ENCODE measurements at regions of chr5 and their contacts with region 1.

Region 1: GRCh38 chr5:52799983-52800393 is 12.3 kb downstream of the ITGA1 start:
- DNase-seq: peak; percentile 92 to 96 (median 94)
- H3K4me3 ChIP-seq: peak overlapping the region; percentile 63 to 100 (median 84)
- H3K27ac ChIP-seq: peak overlapping the region; percentile 49 to 96 (median 88)
- H3K27me3 ChIP-seq: no peaks in the 10 kb centered on the region
- CTCF ChIP-seq: peak in 24 of 56 donors; percentile 7 to 56 (median 30)

Region 2: DNA sequence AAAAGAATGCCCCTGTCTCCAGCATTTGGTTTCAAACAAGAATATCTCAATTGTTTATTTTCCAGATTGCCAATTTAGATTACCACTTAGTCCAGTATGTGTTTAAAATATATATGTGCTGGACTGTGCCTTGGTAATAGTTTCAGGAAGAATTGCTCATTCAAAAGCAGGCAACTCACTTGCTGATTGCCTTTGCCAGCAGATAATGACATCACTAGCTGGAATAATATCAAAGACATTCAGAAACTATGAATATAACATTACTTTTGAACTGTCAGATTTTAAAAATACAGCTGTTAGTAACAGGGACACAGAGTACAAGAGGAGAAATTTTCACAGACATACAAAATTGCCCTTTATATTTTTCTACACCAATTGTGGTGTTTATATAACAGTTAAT is 93.1 kb after region 1 on chr5:
- intact Hi-C with region 1: loop called (anchors 10 kb)
- DNase-seq: no peak
- H3K4me3 ChIP-seq: peak overlapping the region in 2 of 59 donors; percentile 1 to 5
- H3K27ac ChIP-seq: peak overlapping the region in 43 of 59 donors; percentile 1 to 83 (median 55)
- H3K27me3 ChIP-seq: peaks cover 0 to 3% (median 0%) of the 10 kb centered on the region in 45 donors
- CTCF ChIP-seq: peak in 2 of 56 donors; percentile 3 to 13

Region 3: GRCh38 chr5:53095931-53096525 is 296.0 kb after region 1 on chr5:
- intact Hi-C with region 1: loop called in 1 of 2 experiments (anchors 10 kb)
- DNase-seq: peak in 6 of 10 donors; percentile 41 to 86 (median 58)
- H3K4me3 ChIP-seq: no peak overlapping the region
- H3K27ac ChIP-seq: peak overlapping the region in 4 of 59 donors; percentile 11 to 54 (median 29)
- H3K27me3 ChIP-seq: no peaks in the 10 kb centered on the region
- CTCF ChIP-seq: peak; percentile 83 to 99 (median 94)

Region 4: DNA sequence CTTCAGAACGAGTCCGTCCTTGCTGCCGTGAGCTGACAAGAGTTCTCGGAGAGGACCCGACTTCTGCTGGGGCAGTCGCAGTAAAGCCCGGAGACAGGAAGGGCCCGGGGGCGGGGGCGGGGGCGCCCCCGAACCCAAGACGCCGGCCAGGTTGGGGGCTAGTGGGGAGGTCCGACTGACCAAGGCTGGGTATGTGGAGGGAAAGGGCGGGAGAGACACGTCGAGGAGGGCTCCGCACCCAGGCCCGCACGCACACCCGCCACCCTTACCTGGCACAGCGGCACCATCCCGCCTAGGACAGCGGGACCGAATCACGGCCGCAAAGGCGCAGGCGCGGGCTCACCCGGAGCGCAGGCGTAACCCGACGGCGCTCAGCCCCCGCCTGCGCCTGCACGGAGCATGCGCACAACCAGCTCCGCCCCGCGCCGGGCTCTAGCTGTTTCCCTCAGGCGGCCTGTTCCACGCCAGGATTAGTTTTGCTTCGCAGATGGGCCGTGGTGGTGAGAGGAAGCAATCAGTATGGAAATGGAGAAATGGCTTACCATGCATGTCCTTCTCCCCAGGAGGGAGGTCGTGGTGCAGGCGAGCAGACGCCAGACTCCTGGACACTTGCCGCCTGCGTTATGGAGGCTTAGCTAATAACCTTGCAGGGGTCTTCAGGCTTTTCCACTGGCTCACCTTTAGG is 309.6 kb after region 1 on chr5 and contains the start of gene MOCS2:
- intact Hi-C with region 1: loop called in 1 of 2 experiments (anchors 10 kb)
- DNase-seq: peak; percentile 79 to 92 (median 84)
- H3K4me3 ChIP-seq: peak within 1 kb of the TSS; percentile 59 to 92 (median 80)
- H3K27ac ChIP-seq: peak within 1 kb of the TSS; percentile 13 to 92 (median 80)
- H3K27me3 ChIP-seq: no peaks in the 10 kb centered on the region
- CTCF ChIP-seq: peak in 34 of 56 donors; percentile 7 to 58 (median 29)
- total RNA-seq, gene MOCS2: 41.2 to 97.5 (median 69.3) TPM

Region 5: GRCh38 chr5:53133020-53133419 is 333.0 kb after region 1 on chr5:
- intact Hi-C with region 1: no loop called
- DNase-seq: no peak
- H3K4me3 ChIP-seq: no peak overlapping the region
- H3K27ac ChIP-seq: no peak overlapping the region
- H3K27me3 ChIP-seq: no peaks in the 10 kb centered on the region
- CTCF ChIP-seq: no peak

Measured in dorsolateral prefrontal cortex (tissue), 120 donors.